Activated CD4-positive, alpha-beta T cell treated with anti-CD3 and anti-CD28 coated beads for 36 hours (primary cell): ENCODE measurements at regions of chr2 and their contacts with region 1.

Region 1: GRCh38 chr2:120680136-120680761 is 55.4 kb upstream of the GLI2 start:
- DNase-seq: peak; percentile 90
- ATAC-seq: peak; percentile 94
- H3K4me3 Mint-ChIP-seq: peak overlapping the region; percentile 47
- H3K27ac Mint-ChIP-seq: no peak overlapping the region
- H3K4me1 Mint-ChIP-seq: peaks cover 3% of the 10 kb centered on the region
- H3K27me3 Mint-ChIP-seq: peaks cover 22% of the 10 kb centered on the region

Region 2: DNA sequence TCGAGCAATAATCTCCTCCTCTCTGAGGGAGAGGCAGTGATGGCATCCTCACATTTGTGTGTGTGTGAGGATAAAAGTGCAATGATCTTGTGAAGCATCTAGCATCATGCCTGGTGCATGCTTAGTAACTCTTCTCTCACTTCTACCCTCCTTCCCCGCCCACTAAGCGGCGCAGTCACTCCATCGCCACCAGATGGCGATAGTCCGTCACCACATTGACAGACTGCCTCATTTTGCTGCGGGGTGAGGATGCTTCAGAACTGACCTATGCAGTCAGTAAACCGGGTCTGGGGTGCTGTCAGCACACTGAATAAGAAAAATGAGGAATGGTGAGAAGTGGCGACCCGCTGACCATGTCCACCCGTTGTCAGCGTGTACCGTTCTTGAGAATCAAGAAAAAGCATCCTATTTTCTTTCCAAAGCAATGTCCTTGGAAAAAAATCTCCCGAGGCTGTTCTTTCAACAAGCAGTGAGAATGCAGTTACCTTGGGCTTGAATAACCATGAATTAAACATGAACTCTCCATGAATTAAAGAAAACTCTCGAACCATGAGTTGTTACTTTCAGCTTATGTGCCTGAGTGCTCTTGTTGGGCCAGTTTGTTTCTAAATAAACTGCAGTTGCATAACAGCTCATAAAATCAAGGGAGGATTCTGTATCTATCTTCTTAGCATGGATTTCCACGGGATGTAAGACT is 1038.5 kb before region 1 on chr2:
- CTCF ChIA-PET with region 1: interaction called, 3 read pairs
- POLR2A ChIA-PET with region 1: no interaction called
- intact Hi-C with region 1: loop called in 1 of 2 experiments (anchors 2 kb)
- DNase-seq: peak; percentile 87
- ATAC-seq: peak; percentile 99
- H3K4me3 Mint-ChIP-seq: no peak overlapping the region
- H3K27ac Mint-ChIP-seq: no peak overlapping the region
- H3K4me1 Mint-ChIP-seq: peaks cover 2% of the 10 kb centered on the region
- H3K27me3 Mint-ChIP-seq: no peaks in the 10 kb centered on the region

Region 3: GRCh38 chr2:119753041-119753929 is 927.0 kb before region 1 on chr2:
- CTCF ChIA-PET with region 1: no interaction called
- POLR2A ChIA-PET with region 1: no interaction called
- intact Hi-C with region 1: loop called in 1 of 2 experiments (anchors 2 kb)
- DNase-seq: peak; percentile 32
- ATAC-seq: peak; percentile 65
- H3K4me3 Mint-ChIP-seq: no peak overlapping the region
- H3K27ac Mint-ChIP-seq: no peak overlapping the region
- H3K4me1 Mint-ChIP-seq: peaks cover 15% of the 10 kb centered on the region
- H3K27me3 Mint-ChIP-seq: no peaks in the 10 kb centered on the region

Region 4: DNA sequence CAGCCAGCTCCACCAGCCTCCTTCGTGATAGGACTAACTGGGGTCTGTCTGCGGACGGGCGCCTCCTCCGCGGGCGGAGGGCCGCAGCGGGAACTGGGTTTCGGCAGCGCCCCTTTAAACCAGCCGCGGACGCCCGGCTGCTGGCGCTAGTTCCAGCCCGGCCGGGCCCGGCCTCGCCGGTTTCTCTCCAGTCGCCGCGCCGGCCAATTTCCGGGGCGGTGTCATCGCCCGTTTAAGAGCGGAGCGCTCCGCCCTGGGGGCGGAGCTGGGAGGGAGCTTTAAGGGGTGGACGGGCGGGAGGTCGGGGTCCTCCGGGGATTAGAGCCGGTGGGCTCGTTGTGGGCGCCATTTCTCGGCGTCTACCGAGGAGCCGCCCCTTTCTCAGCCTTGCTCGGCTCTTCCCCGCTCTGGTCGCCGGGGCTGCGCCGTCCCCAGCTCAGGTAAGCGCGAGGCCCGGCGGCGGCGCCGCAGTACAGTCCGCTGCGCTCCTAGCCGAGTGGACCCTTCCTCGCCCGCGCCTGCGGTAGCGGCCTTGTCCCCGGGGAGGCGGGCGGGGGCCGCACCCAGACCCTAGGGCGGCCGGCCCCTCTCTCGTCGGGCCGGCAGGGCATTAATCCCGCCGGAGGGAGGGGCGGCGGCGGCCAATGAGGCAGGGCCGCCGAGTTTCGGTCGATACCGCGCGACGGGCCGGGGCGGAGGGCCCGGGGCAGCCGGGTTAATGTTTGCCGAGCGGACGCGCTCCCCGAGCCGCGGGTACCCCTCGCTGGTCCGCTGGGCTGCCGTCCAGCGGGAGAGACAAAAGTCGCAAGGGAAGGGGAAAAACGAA is 667.3 kb before region 1 on chr2 and contains the start of gene EPB41L5:
- CTCF ChIA-PET with region 1: no interaction called
- POLR2A ChIA-PET with region 1: no interaction called
- intact Hi-C with region 1: loop called in 1 of 2 experiments (anchors 10 kb)
- DNase-seq: peak; percentile 90
- ATAC-seq: peak; percentile 95
- H3K4me3 Mint-ChIP-seq: peak within 1 kb of the TSS; percentile 73
- H3K27ac Mint-ChIP-seq: peak within 1 kb of the TSS; percentile 66
- H3K4me1 Mint-ChIP-seq: peaks cover 19% of the 10 kb centered on the region
- H3K27me3 Mint-ChIP-seq: no peaks in the 10 kb centered on the region
- total RNA-seq, gene EPB41L5: 2.2 to 2.4 TPM

Region 5: DNA sequence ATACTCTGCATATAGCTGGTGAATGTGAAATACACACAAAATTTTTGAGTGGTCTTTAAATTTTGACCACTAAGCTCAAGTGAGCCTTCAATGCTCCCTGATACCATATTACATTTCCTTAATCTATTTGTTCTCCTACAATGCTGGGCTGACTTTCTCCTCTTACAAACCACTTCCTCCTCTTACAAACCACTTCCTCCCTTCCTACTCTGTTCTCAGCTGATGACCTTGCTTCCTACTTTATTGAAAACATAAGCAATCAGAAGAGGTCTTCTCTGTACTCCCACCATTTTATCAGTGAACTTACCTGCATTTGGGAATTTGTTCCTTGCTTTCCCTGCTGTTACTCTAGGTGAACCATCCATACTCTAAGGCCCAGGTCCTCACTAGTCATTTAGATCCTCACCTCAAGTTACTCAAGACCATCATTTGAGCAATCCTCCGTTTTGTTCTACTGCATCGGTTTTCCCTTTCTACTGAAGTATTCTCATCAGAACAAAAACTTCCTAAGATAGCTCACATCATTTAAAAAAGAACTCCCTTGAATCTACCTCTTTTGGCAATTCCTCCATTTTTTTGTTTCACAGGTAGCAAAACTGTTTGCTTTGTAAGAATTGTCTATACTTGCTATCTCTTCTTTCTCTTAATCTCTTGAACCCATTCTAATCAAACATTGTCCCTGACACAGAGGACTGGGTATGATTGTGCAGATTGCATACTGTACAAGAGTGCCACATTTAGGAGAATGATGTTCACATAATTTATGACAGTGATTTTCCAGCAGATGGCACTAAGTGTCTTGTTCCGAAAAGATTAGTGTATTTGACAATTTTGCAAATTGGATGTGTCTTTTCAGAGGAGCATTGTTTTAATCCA is 570.8 kb before region 1 on chr2:
- CTCF ChIA-PET with region 1: no interaction called
- POLR2A ChIA-PET with region 1: no interaction called
- intact Hi-C with region 1: loop called (anchors 1 to 10 kb)
- DNase-seq: no peak
- ATAC-seq: peak; percentile 78
- H3K4me3 Mint-ChIP-seq: peak overlapping the region; percentile 3
- H3K27ac Mint-ChIP-seq: peak overlapping the region; percentile 88
- H3K4me1 Mint-ChIP-seq: peaks cover 28% of the 10 kb centered on the region
- H3K27me3 Mint-ChIP-seq: no peaks in the 10 kb centered on the region

Region 6: DNA sequence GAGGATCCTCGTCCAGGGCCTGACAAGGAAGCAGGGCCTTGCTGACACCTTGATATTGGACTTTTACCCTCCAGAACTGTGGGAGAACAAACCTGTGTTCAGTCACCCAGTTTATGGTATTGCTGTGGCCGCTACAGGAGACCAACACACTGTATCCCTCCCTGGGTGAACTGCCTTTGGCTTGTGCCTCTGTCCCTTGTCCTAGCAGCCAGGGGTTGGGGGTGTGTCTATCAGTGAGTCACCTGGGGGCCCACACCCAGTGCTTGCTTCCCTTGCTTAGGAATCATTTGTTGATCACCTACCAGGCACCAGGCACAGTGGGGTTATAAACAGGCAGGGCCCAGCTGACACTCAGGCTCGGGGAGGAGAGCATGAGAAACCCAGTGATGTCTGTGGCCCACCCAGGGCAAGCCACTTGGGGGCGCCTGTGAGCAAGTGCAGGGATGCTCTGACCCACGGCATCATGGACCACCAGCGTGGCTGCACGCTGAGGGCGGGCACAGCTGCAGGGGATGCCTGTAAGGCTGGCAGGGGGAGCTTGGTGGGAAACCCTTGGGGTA is 474.1 kb before region 1 on chr2:
- CTCF ChIA-PET with region 1: no interaction called
- POLR2A ChIA-PET with region 1: no interaction called
- intact Hi-C with region 1: loop called in 1 of 2 experiments (anchors 10 kb)
- DNase-seq: peak; percentile 75
- ATAC-seq: peak; percentile 80
- H3K4me3 Mint-ChIP-seq: no peak overlapping the region
- H3K27ac Mint-ChIP-seq: no peak overlapping the region
- H3K4me1 Mint-ChIP-seq: peaks cover 4% of the 10 kb centered on the region
- H3K27me3 Mint-ChIP-seq: no peaks in the 10 kb centered on the region

Region 7: GRCh38 chr2:120693121-120693520 is 12.9 kb after region 1 on chr2:
- CTCF ChIA-PET with region 1: interaction called, 12 read pairs
- POLR2A ChIA-PET with region 1: no interaction called
- intact Hi-C with region 1: no loop called
- DNase-seq: no peak
- ATAC-seq: no peak
- H3K4me3 Mint-ChIP-seq: no peak overlapping the region
- H3K27ac Mint-ChIP-seq: no peak overlapping the region
- H3K4me1 Mint-ChIP-seq: peaks cover 5% of the 10 kb centered on the region
- H3K27me3 Mint-ChIP-seq: peaks cover 35% of the 10 kb centered on the region